ENCODE measurements at regions of chr5 and their contacts with region 1.

Region 1: GRCh38 chr5:115831163-115831768 is 10.1 kb downstream of the ATG12 start:
- DNase-seq: no peak
- ATAC-seq: peak; percentile 87 to 95 (median 92)
- H3K4me3 ChIP-seq: no peak overlapping the region
- H3K27ac ChIP-seq: peak overlapping the region in 2 of 3 donors; percentile 16 to 71
- H3K4me1 ChIP-seq: peaks cover 0 to 22% (median 6%) of the 10 kb centered on the region in 4 donors
- H3K27me3 ChIP-seq: no peaks in the 10 kb centered on the region
- CTCF ChIP-seq: peak; percentile 84 to 89 (median 86)
- POLR2A ChIP-seq: no peak

Region 2: GRCh38 chr5:115565233-115565632 is 266.0 kb before region 1 on chr5:
- intact Hi-C with region 1: no loop called
- DNase-seq: no peak
- ATAC-seq: no peak
- H3K4me3 ChIP-seq: no peak overlapping the region
- H3K27ac ChIP-seq: no peak overlapping the region
- H3K4me1 ChIP-seq: no peaks in the 10 kb centered on the region
- H3K27me3 ChIP-seq: no peaks in the 10 kb centered on the region
- CTCF ChIP-seq: no peak
- POLR2A ChIP-seq: no peak

Region 3: DNA sequence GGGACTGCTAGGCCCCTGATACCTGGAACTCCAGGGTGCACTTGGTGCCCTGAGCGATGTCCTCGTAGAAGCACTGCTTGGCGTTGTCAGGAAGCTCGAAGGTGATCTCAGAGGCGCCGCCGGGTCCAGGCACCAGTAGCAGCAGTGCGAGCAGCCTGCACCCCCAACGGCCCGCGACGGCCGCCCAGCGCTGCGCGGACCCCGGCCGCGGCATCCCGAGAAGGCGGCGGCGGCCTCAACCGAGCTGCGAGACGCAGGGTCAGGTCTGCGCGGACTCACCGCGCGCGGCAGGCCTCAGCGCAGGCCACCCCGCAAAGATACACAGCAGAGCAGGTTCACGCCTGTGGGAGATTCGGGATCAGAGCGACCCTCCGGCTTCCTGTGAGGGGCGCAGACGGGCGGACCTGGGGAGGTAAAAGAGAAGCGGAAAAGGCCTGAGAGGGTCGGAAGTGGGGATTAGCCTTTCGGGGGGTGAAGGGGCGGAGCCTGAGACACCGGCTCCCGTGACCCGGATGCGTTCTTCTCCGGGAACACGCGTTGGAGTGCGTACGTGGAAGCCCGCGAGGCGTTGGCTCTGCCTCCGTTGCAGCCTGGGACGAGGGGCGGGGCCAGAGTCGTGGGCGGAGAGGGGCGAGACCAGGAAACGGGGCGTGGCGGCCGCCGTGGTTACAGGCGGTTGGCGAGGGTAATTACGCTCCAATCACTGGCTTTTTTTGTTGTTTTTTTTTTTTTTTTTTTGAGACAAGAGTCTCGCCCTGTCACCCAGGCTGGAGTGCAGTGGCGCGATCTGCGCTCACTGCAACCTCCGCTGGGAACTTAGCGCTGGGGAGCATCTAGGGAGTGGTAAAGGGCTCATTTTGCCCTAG is 205.5 kb before region 1 on chr5 and contains the start of gene TMED7:
- intact Hi-C with region 1: loop called in 1 of 2 experiments (anchors 10 kb)
- DNase-seq: peak; percentile 100
- ATAC-seq: peak; percentile 96 to 99 (median 98)
- H3K4me3 ChIP-seq: peak within 1 kb of the TSS; percentile 86 to 92 (median 90)
- H3K27ac ChIP-seq: peak within 1 kb of the TSS; percentile 89 to 97 (median 95)
- H3K4me1 ChIP-seq: peaks cover 0 to 22% (median 6%) of the 10 kb centered on the region in 4 donors
- H3K27me3 ChIP-seq: no peaks in the 10 kb centered on the region
- CTCF ChIP-seq: peak in 2 of 4 donors; percentile 14 to 17
- POLR2A ChIP-seq: peak; percentile 98
- total RNA-seq, gene TMED7: 69.8 to 103 (median 91.7) TPM

Region 4: GRCh38 chr5:115723220-115723619 is 108.0 kb before region 1 on chr5:
- intact Hi-C with region 1: no loop called
- DNase-seq: no peak
- ATAC-seq: peak; percentile 64 to 82 (median 73)
- H3K4me3 ChIP-seq: no peak overlapping the region
- H3K27ac ChIP-seq: no peak overlapping the region
- H3K4me1 ChIP-seq: peaks cover 0 to 9% (median 0%) of the 10 kb centered on the region in 4 donors
- H3K27me3 ChIP-seq: no peaks in the 10 kb centered on the region
- CTCF ChIP-seq: no peak
- POLR2A ChIP-seq: no peak

Measured in right lobe of liver (tissue), 6 donors.